GM10248 (cell line): ENCODE measurements at regions of chr12 and their contacts with region 1.

Region 1: GRCh38 chr12:12521044-12521485 is 41.6 kb downstream of the DUSP16 start:
- DNase-seq: no peak
- CTCF ChIP-seq: no peak

Region 2: DNA sequence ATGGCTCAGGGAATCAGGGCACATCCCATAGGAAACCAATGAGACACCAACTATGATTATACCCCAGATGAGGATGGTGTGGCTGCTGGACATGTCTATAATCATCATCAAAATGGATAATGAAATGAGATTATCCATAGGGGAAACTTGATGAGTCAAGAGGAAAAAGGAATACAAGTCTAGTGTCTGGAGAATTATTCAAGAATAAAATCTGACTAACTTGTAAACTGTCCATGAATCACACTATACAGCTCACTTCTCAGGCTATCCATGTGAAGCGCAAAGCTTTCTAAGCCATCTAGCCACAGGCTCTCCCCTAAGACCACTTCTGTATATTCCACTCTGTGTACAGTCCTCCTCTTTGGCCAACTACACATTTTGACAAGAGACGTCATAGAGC is 10.9 kb before region 1 on chr12:
- CTCF ChIA-PET with region 1: interaction called, 14 read pairs
- POLR2A ChIA-PET with region 1: no interaction called
- DNase-seq: no peak
- CTCF ChIP-seq: no peak